ENCODE measurements at regions of chr18 and their contacts with region 1.

Region 1: DNA sequence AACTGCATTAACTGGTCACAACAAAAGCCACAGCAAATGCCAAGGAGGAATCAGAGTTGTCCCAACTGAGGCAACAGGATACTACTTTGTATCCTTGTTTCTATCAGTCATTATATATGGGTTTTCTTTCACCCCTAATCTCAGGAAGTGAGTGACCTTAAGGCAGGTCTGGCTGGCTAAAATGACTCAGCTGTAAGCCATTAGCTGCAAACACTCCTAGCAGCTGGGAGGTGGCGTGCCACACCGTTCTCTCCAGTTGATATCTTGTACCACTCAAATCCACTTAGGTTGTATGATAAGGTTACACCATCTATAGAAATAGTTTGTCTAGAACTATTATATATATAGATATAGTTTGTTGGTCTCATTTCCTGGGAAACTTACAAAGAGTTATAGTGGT is 171.1 kb upstream of the MC4R start:
- DNase-seq: no peak
- H3K4me3 Mint-ChIP-seq: no peak overlapping the region
- H3K27ac Mint-ChIP-seq: no peak overlapping the region
- H3K4me1 Mint-ChIP-seq: no peaks in the 10 kb centered on the region
- H3K27me3 Mint-ChIP-seq: no peaks in the 10 kb centered on the region

Region 2: GRCh38 chr18:59459369-59460079 is 1084.1 kb before region 1 on chr18:
- intact Hi-C with region 1: loop called (anchors 5 kb)
- DNase-seq: no peak
- H3K4me3 Mint-ChIP-seq: no peak overlapping the region
- H3K27ac Mint-ChIP-seq: no peak overlapping the region
- H3K4me1 Mint-ChIP-seq: no peaks in the 10 kb centered on the region
- H3K27me3 Mint-ChIP-seq: peaks cover 4% of the 10 kb centered on the region

Measured in activated T-helper 2 cell treated with anti-CD3 and anti-CD28 coated beads, Interferon-gamma antibody, Interleukin-2, Interleukin-4, amounts not matched to agents 10 μg/mL and 5 μg/mL and 100 μg/mL, durations not matched to agents 14 hours and 24 hours and 36 hours (primary cell).